ENCODE measurements at regions of chr3 and their contacts with region 1.

Region 1: GRCh38 chr3:165837058-165837525 is at the start of gene BCHE:
- DNase-seq: no peak
- H3K4me3 ChIP-seq: peak within 1 kb of the TSS; percentile 38 to 61 (median 56)
- H3K27ac ChIP-seq: peak within 1 kb of the TSS; percentile 64 to 68 (median 65)
- H3K4me1 ChIP-seq: peaks cover 0 to 11% (median 9%) of the 10 kb centered on the region in 4 donors
- H3K27me3 ChIP-seq: no peaks in the 10 kb centered on the region
- CTCF ChIP-seq: no peak
- EP300 ChIP-seq: no peak
- POLR2A ChIP-seq: no peak
- total RNA-seq, gene BCHE: 46.6 to 71.8 (median 49.0) TPM

Region 2: GRCh38 chr3:165359005-165359404 is 478.1 kb before region 1 on chr3:
- intact Hi-C with region 1: loop called (anchors 10 kb)
- DNase-seq: no peak
- H3K4me3 ChIP-seq: no peak overlapping the region
- H3K27ac ChIP-seq: no peak overlapping the region
- H3K4me1 ChIP-seq: peaks cover 0 to 15% (median under 1%) of the 10 kb centered on the region in 4 donors
- H3K27me3 ChIP-seq: no peaks in the 10 kb centered on the region
- CTCF ChIP-seq: no peak
- EP300 ChIP-seq: no peak
- POLR2A ChIP-seq: no peak

Measured in esophagus muscularis mucosa (tissue), 4 donors.